ENCODE measurements at regions of chr17 and their contacts with region 1.

Region 1: DNA sequence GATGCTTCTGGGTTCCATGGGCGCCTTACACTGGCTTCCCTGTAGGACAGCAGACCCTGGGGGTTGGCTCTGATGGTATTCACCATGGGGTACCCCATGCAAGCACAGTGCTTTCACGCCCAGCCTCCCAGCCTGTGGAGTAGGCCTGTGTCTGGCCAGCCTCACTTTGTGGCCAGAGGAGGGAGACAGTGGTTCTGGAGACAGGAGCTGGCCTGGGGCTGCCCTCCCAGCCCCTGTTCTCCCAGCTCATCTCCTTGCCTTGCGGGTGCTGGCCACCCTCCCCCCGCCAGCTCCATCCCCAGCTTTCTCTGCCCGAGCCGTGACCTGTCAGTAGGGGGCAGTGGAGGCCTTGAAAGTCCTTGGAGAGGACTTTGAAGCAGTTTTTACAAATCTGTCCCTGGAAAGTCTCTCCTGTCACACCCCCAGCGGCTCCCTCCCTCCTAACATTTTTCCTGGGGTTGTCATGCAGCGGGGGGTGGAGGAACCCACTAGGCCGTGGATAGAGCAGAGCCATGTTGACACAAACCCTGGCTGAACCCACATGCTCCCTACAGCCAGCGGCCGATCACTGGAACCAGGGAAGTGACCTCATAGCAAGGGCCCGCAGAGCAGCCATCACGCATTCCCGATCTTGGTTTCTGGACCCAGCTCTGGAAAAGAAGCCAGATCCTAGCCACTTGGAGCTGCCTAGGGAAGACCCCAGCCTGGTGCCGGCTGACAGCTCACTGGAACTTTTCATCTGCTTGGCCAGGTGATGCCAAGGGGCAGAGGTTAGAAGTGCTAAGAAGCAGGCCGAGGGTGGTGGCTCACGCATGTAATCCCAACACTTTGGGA is 289.4 kb downstream of the SEC14L1 start:
- DNase-seq: peak; percentile 81 to 91 (median 88)
- ATAC-seq: peak; percentile 77
- H3K4me3 ChIP-seq: no peak overlapping the region
- H3K27ac ChIP-seq: peak overlapping the region; percentile 9 to 64
- H3K4me1 ChIP-seq: peaks cover 66 to 88% of the 10 kb centered on the region in 2 donors
- H3K27me3 ChIP-seq: no peaks in the 10 kb centered on the region
- CTCF ChIP-seq: peak; percentile 71 to 87

Region 2: DNA sequence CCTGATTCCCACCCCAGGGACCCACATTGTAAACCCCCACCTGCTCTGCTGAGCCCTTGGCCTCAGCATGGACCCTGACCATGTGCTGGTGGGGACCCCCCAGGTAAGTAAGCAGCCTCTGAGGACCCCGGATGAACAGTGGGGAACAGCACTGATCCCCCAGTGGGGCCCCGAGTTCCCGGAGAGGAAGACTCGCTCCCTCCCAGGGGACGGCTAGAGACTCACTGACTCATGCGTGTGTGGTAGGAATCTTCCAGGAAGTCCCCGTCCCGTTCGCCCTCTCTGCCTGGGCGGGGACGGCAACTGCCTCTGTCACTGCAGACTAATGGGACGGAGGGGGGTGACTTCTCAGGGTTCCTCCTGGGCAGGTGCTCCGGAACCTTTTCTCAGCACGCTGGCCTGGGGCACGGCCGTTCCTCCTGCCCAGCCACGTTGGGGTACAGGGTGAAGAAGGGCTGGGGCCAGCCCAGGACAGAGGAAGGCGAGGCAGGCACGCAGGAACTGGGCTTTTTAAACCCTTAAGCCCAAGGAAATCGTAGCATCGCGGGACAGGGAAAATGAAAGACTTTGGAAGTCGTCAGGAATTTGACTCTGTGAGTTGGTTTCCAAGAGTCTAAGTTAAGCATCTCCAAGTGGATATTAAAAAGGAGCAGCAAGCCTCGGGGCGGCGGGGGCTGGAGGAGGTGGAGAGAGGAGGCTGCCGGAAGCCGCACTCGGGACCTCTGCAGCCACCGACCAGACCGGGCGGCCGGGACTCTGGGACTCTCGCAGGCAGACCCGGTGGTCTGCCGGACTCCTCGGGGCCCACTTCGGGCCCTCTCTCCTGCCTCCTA is 110.7 kb before region 1 on chr17:
- intact Hi-C with region 1: loop called in 1 of 2 experiments (anchors 10 kb)
- DNase-seq: peak in 3 of 4 donors; percentile 65 to 94 (median 92)
- ATAC-seq: peak; percentile 75
- H3K4me3 ChIP-seq: peak overlapping the region; percentile 43 to 69
- H3K27ac ChIP-seq: peak overlapping the region; percentile 89 to 93
- H3K4me1 ChIP-seq: peaks cover 56 to 89% of the 10 kb centered on the region in 2 donors
- H3K27me3 ChIP-seq: no peaks in the 10 kb centered on the region
- CTCF ChIP-seq: no peak

Region 3: GRCh38 chr17:77372444-77373298 is 57.5 kb before region 1 on chr17:
- intact Hi-C with region 1: no loop called
- DNase-seq: peak; percentile 83 to 96 (median 92)
- ATAC-seq: peak; percentile 54
- H3K4me3 ChIP-seq: peak overlapping the region; percentile 61 to 72
- H3K27ac ChIP-seq: peak overlapping the region; percentile 87 to 92
- H3K4me1 ChIP-seq: peaks cover 55 to 82% of the 10 kb centered on the region in 2 donors
- H3K27me3 ChIP-seq: peaks cover 0 to 4% of the 10 kb centered on the region in 2 donors
- CTCF ChIP-seq: no peak

Region 4: DNA sequence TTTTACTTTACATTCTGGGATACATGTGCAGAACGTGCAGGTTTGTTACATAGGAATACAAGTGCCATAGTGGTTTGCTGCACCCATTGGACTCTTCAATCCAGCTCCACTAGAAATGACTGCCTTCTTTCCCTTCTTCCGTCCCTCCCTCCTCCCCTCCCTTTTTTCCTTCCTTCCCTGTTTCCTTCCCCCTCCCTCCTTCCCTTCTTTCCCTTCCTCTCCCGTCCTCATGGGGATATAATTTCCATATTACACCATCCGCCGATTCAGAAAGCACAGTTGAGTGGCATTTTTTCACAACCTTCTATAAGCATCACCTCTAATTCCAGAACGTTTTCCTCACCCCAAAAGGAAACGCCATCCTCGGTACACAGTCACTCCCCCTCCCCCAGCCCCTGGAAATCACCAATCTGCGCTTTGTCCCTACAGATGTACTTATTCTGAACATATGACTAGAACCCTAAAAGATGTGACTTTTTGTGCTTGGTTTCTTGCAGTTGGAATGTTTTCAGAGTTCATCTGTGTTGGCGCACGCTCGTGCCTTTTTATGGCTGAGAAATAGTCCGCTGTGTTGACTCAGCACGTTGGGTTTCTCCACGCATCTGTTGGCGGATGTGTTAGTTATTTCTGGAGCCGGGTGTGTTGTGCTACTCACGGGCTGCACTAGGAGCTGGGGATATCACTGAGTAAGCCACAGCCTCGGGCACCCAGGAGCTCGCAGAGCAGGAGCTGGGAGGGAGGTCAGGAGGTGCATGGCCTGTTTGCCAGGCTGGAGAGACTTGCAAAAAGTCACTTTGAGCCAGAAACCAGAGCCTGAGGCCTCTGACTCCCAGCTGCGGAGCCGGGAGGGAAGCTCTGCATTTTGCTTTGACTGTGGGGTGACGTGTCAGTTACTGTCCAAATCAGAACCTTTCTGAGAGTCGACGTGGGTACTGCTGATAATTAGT is 47.1 kb after region 1 on chr17:
- intact Hi-C with region 1: loop called in 1 of 2 experiments (anchors 5 kb)
- DNase-seq: peak in 3 of 4 donors; percentile 59 to 85 (median 67)
- ATAC-seq: peak; percentile 12
- H3K4me3 ChIP-seq: no peak overlapping the region
- H3K27ac ChIP-seq: peak overlapping the region in 1 of 2 donors; percentile 33
- H3K4me1 ChIP-seq: peaks cover 51 to 79% of the 10 kb centered on the region in 2 donors
- H3K27me3 ChIP-seq: no peaks in the 10 kb centered on the region
- CTCF ChIP-seq: no peak

Region 5: DNA sequence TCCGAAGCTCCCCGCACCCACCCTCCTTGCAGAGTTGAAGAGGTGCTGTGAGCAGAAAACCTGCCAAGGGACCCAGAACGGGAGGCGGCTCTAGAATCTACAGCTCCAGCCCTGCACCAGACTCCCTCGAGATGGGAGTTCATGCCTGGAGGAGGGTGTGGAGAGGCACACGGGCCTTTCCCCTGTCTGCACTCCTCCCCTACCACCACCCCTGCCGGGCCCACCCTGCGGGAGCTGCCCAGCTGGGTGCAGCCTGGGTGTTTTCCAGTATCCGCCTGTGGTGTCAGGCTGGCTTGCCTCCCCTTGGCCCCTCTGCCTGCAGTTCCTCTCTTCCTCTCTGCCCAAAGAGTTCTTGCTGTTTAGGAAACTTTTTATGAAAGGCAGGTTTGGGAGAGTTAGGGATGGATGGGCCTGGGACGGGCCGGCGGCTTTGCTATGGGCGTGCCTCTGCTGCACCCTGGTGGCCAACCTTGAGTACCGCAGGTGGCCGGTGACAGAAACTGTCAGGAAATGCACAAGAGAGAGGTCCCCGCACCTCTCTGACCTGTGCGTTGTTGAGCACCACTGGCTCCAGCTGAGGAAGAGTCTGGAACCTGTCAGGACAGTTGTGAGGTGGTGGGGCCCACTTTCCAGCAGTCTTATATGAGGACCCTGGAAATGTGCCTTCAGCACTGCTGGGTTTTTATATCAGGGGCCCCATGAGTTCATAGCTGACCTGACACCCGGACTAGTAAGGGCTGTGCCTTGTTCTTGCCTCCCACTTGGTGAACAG is 64.7 kb after region 1 on chr17:
- intact Hi-C with region 1: loop called in 1 of 2 experiments (anchors 5 kb)
- DNase-seq: peak; percentile 73 to 91 (median 83)
- ATAC-seq: peak; percentile 90
- H3K4me3 ChIP-seq: no peak overlapping the region
- H3K27ac ChIP-seq: no peak overlapping the region
- H3K4me1 ChIP-seq: peaks cover 0 to 32% of the 10 kb centered on the region in 2 donors
- H3K27me3 ChIP-seq: no peaks in the 10 kb centered on the region
- CTCF ChIP-seq: peak; percentile 92 to 96

Measured in left lung (tissue), 14 donors.